Right ventricle myocardium superior (tissue), 1 donor: ENCODE measurements at regions of chr11 and their contacts with region 1.

Region 1: DNA sequence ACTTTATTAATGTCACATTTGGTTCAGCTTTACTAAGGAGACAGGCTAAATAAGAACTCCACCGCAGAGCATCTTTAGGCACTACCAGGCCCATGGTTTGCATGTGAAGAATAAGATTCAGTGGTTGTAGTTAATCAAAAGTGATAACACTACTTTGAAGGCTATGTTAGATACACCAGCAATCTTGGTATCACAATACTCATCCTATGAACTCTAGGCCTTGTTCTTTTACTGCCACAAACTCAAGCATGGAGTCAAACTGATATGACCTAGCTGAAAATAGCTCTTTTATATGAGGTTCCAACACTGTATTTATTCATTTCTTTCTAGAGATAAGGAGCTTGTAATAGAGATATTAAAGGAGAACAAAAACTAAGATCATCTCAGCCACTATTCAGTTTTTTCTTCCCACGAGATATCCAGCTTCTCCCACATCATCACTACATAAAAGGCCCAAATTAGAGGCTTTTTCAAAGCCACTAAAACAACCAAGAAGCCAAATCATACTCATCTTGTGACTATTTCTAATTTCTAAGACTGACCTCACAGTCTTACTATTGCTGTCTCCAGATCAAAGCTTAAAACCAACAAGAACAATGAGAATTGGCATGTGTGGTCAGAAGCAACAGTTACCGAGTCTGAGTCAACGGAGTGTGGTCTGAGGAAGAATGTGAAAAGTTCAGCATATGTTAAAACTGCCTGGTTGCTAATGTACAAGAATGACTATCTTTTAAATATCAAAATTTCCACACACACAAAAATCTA is 25.1 kb upstream of the GUCY1A2 start:
- DNase-seq: no peak
- ATAC-seq: no peak

Region 2: GRCh38 chr11:106724293-106724892 is 319.0 kb before region 1 on chr11:
- intact Hi-C with region 1: loop called (anchors 10 kb)
- DNase-seq: no peak
- ATAC-seq: no peak